ENCODE measurements at regions of chr10 and their contacts with region 1.

Region 1: DNA sequence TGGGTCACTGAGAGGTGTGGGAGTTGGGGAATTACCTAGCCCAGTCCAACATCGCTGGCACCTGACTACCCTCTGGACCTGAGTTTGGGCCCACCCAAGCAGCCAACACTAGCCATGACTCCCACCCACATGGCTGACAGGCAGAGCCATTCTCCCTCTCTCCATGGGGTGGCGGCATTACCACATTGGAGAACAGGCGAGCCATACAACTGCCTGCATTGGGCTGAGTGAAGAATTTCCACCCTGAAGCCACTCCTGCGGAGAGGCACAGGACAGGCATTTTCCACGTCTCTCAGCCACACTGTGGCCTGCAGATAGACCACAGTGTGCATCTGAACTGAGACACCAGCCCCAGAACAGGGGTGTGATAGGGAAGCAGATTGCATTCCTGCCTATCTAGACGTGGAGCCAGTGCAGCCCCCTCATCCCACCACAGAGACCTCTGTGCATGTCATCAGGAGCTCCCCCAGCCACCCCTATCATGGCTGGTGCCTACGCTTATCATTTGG is 58.2 kb upstream of the ANTXRL start:
- DNase-seq: peak; percentile 50
- H3K4me3 ChIP-seq: no peak overlapping the region
- H3K27ac ChIP-seq: no peak overlapping the region
- H3K27me3 ChIP-seq: peaks cover 7% of the 10 kb centered on the region
- CTCF ChIP-seq: peak; percentile 99

Region 2: GRCh38 chr10:46216836-46217751 is 11.5 kb before region 1 on chr10:
- CTCF ChIA-PET with region 1: no interaction called
- POLR2A ChIA-PET with region 1: no interaction called
- DNase-seq: no peak
- H3K4me3 ChIP-seq: no peak overlapping the region
- H3K27ac ChIP-seq: no peak overlapping the region
- H3K27me3 ChIP-seq: no peaks in the 10 kb centered on the region
- CTCF ChIP-seq: no peak

Region 3: GRCh38 chr10:46239247-46239646 is 10.6 kb after region 1 on chr10:
- CTCF ChIA-PET with region 1: interaction called, 16 read pairs
- POLR2A ChIA-PET with region 1: no interaction called
- DNase-seq: no peak
- H3K4me3 ChIP-seq: no peak overlapping the region
- H3K27ac ChIP-seq: no peak overlapping the region
- H3K27me3 ChIP-seq: peaks cover 3% of the 10 kb centered on the region
- CTCF ChIP-seq: no peak

Measured in AG04450 (cell line).